ENCODE measurements at regions of chr15 and their contacts with region 1.

Region 1: GRCh38 chr15:85730001-85730820 is 64.5 kb downstream of the KLHL25 start:
- DNase-seq: no peak

Region 2: DNA sequence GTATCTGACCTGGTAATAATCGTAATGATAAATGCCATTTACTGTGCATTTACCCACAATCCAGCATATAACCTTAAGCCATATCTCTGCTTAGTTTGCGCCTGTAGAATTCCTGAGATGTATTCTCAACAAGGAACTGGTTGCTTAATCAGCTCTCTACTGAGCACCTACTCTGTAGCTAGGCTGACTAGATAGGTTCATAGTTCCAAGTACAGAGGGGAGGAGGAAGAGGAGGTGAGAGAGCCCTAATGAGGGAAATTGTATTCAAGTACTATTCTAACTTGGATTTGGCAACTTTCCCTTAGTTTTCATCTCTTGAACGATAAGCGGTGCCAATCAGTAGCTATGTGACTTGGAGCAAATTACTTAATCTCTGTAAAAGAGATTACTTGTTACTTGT is 355.4 kb before region 1 on chr15:
- intact Hi-C with region 1: no loop called
- DNase-seq: no peak

Region 3: GRCh38 chr15:85618956-85619491 is 111.2 kb before region 1 on chr15:
- intact Hi-C with region 1: loop called (anchors 5 kb)
- DNase-seq: peak; percentile 84

Region 4: GRCh38 chr15:85840065-85840801 is 110.0 kb after region 1 on chr15:
- intact Hi-C with region 1: loop called (anchors 1 kb)
- DNase-seq: peak; percentile 91